ENCODE measurements at regions of chr10 and their contacts with region 1.

Region 1: DNA sequence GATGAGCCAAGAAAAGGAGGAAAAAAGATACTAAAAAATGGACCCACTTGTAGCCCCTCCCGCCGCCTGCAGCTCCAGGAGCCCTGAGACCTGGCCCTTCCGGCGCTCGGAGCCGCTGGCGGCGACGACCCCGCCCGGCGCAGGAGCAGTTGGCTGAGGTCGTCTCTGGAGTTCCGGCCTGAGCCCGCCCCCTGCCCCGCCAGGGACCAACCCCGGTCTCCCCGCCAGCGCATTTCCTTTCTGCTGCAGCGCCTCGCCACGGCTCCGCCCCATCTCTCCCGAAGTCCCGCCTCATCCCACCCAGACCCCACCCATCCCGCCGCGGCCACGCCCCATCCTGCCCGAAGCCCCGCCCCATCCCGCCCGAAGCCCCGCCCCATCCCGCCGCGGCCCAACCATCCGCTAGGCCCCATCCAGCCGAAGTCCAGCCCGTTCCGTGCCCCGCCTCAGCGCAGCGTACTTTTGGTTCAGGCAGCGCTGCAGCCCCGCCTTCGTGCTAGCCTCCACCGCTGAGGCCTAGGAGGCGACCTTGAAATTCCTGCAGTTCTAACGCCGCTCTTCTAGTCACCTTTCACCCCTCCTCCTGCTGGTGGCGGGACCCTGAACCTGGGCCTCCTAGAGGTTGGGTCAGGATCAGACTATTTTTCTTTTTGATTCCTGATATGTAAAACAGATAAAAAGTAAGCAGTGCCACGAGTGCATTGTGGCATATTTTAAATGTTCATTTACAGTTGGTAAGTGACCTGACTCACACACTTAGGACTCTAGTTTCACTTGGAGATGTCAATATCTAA is at the start of gene STN1:
- DNase-seq: peak; percentile 97
- H3K4me3 ChIP-seq: peak within 1 kb of the TSS; percentile 75
- H3K27ac ChIP-seq: peak within 1 kb of the TSS; percentile 55
- H3K4me1 ChIP-seq: peaks cover 28% of the 10 kb centered on the region
- CTCF ChIP-seq: peak; percentile 54
- total RNA-seq, gene STN1: 19.5 and 20.9 TPM in 2 replicates

Region 2: DNA sequence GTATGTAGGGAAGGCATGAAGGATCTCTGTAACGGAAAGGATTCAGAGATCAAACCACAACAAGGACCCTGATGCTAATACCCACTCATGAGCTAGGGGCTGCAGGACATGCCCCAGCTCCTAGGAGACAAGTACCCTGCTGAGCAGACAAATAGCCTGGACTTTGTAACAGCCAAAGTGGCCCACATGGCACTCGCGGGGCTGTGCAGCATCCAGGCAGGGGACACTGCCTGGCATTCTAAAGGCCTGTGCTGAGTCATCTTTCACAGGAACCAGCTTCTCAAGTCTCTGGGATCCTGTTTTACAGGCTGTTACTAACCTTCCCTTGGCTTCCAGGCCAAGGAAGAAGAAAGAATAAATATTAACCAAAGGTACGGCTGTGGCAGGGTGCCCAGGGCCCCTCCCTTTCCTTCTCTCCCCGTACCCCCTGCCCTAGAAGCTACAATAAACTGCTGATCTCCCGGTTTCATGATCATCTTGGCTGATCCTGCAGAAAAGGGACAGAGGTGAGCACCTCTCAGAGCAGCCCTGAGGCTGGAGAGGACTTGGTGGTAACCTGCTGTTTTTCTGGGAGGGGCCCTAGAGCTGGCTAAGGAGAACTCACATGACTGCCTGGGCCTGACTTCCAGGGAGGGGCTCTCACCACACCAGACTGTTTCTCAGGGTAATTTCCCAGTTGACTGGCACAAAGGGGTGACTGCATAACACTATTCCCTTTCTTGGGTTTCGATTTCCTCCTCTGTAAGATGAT is 676.8 kb before region 1 on chr10:
- CTCF ChIA-PET with region 1: no interaction called
- POLR2A ChIA-PET with region 1: no interaction called
- intact Hi-C with region 1: no loop called
- DNase-seq: no peak
- H3K4me3 ChIP-seq: no peak overlapping the region
- H3K27ac ChIP-seq: no peak overlapping the region
- H3K4me1 ChIP-seq: peaks cover 8% of the 10 kb centered on the region
- CTCF ChIP-seq: no peak

Region 3: GRCh38 chr10:103816431-103816830 is 101.8 kb before region 1 on chr10:
- CTCF ChIA-PET with region 1: no interaction called
- POLR2A ChIA-PET with region 1: no interaction called
- intact Hi-C with region 1: no loop called
- DNase-seq: no peak
- H3K4me3 ChIP-seq: no peak overlapping the region
- H3K27ac ChIP-seq: no peak overlapping the region
- H3K4me1 ChIP-seq: peaks cover 4% of the 10 kb centered on the region
- CTCF ChIP-seq: no peak

Region 4: GRCh38 chr10:103829838-103830465 is 88.3 kb before region 1 on chr10:
- CTCF ChIA-PET with region 1: no interaction called
- POLR2A ChIA-PET with region 1: interaction called, 11 read pairs
- intact Hi-C with region 1: no loop called
- DNase-seq: no peak
- H3K4me3 ChIP-seq: no peak overlapping the region
- H3K27ac ChIP-seq: no peak overlapping the region
- H3K4me1 ChIP-seq: peaks cover 55% of the 10 kb centered on the region
- CTCF ChIP-seq: no peak

Region 5: GRCh38 chr10:103933557-103934121 is 15.4 kb after region 1 on chr10:
- CTCF ChIA-PET with region 1: no interaction called
- POLR2A ChIA-PET with region 1: no interaction called
- intact Hi-C with region 1: no loop called
- DNase-seq: no peak
- H3K4me3 ChIP-seq: no peak overlapping the region
- H3K27ac ChIP-seq: no peak overlapping the region
- H3K4me1 ChIP-seq: no peaks in the 10 kb centered on the region
- CTCF ChIP-seq: no peak